ACHN (cell line): ENCODE measurements at regions of chr10 and their contacts with region 1.

Region 1: GRCh38 chr10:116796910-116797513 is 52.3 kb upstream of the ENO4 start:
- DNase-seq: peak; percentile 80

Region 2: DNA sequence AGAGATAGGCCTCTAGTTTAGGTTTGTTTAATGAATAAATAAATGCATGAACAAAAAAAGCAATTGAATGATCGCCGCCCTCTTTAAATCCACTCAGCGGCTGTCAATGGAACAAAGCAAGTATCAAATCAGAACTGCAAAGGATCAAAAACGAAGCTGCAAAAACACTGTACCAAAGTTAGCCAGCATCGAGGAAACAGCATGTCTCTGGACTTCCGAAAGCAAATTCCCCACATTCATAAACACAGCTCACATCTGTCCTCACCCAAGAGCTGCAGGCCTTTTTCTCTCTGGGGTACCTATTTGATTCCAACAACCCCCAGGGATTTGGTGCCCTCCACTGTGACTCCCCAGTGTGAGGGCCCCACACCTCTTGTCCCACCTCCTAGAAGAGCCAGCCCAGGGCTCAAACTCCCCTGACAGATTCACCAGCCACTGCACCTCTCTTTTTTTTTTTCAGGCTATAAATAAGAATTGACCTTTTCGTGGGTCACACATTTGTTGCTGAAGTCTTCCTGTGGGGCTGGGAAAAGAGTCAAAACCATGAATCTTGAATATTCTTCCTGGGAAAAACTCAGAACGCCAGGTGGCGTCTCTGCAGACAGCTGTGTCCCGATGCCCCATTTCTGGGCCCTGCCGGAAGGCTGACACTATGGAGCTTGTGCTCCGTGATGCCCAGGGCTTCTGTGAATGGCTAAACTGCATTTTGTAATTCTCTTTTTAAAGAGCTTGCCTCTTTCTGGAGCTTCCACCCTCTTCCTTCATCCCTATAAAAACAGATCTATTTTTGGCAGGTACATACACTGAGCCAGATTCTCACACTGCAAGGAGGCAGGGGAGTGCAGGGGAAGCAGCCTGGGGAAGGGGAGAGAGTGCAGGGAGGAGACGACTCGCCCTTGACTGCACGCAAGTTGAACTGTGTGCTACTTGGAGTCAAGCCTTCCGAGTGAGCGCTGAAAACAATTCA is 106.4 kb before region 1 on chr10:
- in situ Hi-C with region 1: loop called (anchors 25 kb)
- DNase-seq: no peak

Region 3: DNA sequence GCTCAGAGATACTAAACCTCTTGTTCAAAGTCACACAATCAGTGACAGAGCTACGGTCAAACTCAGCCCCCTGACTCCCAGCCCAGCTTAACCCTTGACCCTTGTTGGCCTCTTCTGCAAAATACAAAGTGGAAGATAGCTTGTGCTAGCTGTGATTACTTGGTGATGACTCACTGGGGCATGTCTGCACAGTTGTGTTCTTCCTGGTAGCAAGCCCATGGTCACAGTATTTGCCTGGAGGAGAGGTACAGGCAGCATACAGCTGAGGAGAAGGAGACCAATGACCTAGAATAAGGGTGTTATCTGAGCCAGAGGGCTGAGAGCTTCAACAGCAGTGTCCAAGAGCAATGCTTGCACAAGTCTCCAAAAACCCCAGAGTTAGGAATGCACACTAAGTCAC is 49.0 kb before region 1 on chr10:
- in situ Hi-C with region 1: no loop called
- DNase-seq: peak; percentile 34